Activated naive CD4-positive, alpha-beta T cell treated with anti-CD3 and anti-CD28 coated beads for 36 hours (primary cell): ENCODE measurements at regions of chr12 and their contacts with region 1.

Region 1: GRCh38 chr12:55738123-55739024 is 4.5 kb upstream of the GDF11 start:
- DNase-seq: peak; percentile 89
- H3K4me3 Mint-ChIP-seq: peak overlapping the region; percentile 75
- H3K27ac Mint-ChIP-seq: peak overlapping the region; percentile 82
- H3K4me1 Mint-ChIP-seq: peaks cover 22% of the 10 kb centered on the region
- H3K27me3 Mint-ChIP-seq: no peaks in the 10 kb centered on the region

Region 2: GRCh38 chr12:55659486-55660385 is 78.6 kb before region 1 on chr12:
- CTCF ChIA-PET with region 1: interaction called, 13 read pairs
- intact Hi-C with region 1: loop called (anchors 1 kb)
- DNase-seq: peak; percentile 29
- H3K4me3 Mint-ChIP-seq: no peak overlapping the region
- H3K27ac Mint-ChIP-seq: no peak overlapping the region
- H3K4me1 Mint-ChIP-seq: no peaks in the 10 kb centered on the region
- H3K27me3 Mint-ChIP-seq: no peaks in the 10 kb centered on the region

Region 3: GRCh38 chr12:55715833-55716581 is 22.4 kb before region 1 on chr12 and contains the start of gene BLOC1S1:
- CTCF ChIA-PET with region 1: interaction called, 32 read pairs
- intact Hi-C with region 1: loop called (anchors 1 kb)
- DNase-seq: peak; percentile 96
- H3K4me3 Mint-ChIP-seq: peak within 1 kb of the TSS; percentile 92
- H3K27ac Mint-ChIP-seq: peak within 1 kb of the TSS; percentile 91
- H3K4me1 Mint-ChIP-seq: peaks cover 28% of the 10 kb centered on the region
- H3K27me3 Mint-ChIP-seq: peaks cover 3% of the 10 kb centered on the region
- total RNA-seq, gene BLOC1S1: 118 to 124 TPM

Region 4: GRCh38 chr12:55899082-55899481 is 160.7 kb after region 1 on chr12:
- CTCF ChIA-PET with region 1: interaction called, 11 read pairs
- intact Hi-C with region 1: loop called (anchors 1 kb)
- DNase-seq: peak; percentile 71
- H3K4me3 Mint-ChIP-seq: no peak overlapping the region
- H3K27ac Mint-ChIP-seq: peak overlapping the region; percentile 70
- H3K4me1 Mint-ChIP-seq: peaks cover 13% of the 10 kb centered on the region
- H3K27me3 Mint-ChIP-seq: no peaks in the 10 kb centered on the region

Region 5: GRCh38 chr12:55973598-55974307 is 235.4 kb after region 1 on chr12 and contains the start of gene RAB5B:
- CTCF ChIA-PET with region 1: interaction called, 16 read pairs
- intact Hi-C with region 1: loop called (anchors 1 kb)
- DNase-seq: peak; percentile 99
- H3K4me3 Mint-ChIP-seq: no peak within 1 kb of the TSS
- H3K27ac Mint-ChIP-seq: no peak within 1 kb of the TSS
- H3K4me1 Mint-ChIP-seq: peaks cover 24% of the 10 kb centered on the region
- H3K27me3 Mint-ChIP-seq: no peaks in the 10 kb centered on the region
- total RNA-seq, gene RAB5B: 33.2 to 35.7 TPM

Region 6: GRCh38 chr12:56041552-56042429 is 303.4 kb after region 1 on chr12 and contains the start of gene RPS26:
- CTCF ChIA-PET with region 1: interaction called, 8 read pairs
- intact Hi-C with region 1: loop called (anchors 1 kb)
- DNase-seq: peak; percentile 96
- H3K4me3 Mint-ChIP-seq: peak within 1 kb of the TSS; percentile 96
- H3K27ac Mint-ChIP-seq: peak within 1 kb of the TSS; percentile 98
- H3K4me1 Mint-ChIP-seq: peaks cover 57% of the 10 kb centered on the region
- H3K27me3 Mint-ChIP-seq: no peaks in the 10 kb centered on the region
- total RNA-seq, gene RPS26: 31.0 to 37.3 TPM

Region 7: DNA sequence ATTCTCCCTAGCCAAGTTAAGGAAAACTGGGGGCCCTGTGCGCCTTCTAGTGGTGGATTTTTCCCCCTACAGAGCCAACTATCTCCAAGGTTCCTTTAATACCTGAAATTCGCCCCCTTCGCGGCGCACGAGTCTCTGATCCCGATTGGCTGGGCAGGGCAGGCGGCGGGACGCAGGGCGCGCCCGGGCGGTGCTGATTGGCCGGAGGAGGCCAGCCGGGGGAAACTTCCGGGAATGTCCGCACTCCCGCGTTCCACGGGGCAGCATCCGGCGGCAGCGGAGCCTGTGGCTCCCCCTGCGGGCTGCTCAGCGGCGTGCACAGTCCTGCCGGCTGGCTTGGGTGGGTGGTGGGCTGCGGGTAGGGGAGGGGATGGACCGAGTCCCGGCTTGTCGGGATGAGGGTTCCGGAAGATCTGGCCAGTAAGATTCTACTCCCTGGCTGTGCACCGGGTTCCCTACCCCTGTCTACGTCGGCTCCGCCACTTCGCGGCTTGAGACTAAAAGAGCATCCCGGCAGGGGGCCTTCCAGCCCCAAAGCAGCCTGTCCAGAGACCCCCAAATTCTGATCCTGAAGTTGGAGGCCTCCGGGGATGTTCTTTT is 485.8 kb after region 1 on chr12 and contains the start of gene NABP2:
- CTCF ChIA-PET with region 1: no interaction called
- intact Hi-C with region 1: loop called (anchors 2 kb)
- DNase-seq: peak; percentile 97
- H3K4me3 Mint-ChIP-seq: peak within 1 kb of the TSS; percentile 99
- H3K27ac Mint-ChIP-seq: peak within 1 kb of the TSS; percentile 93
- H3K4me1 Mint-ChIP-seq: peaks cover 37% of the 10 kb centered on the region
- H3K27me3 Mint-ChIP-seq: no peaks in the 10 kb centered on the region
- total RNA-seq, gene NABP2: 57.4 to 59.0 TPM